ENCODE measurements at regions of chr6 and their contacts with region 1.

Region 1: GRCh38 chr6:83057705-83058321 is 7.8 kb downstream of the UBE3D start:
- DNase-seq: peak; percentile 26
- ATAC-seq: peak; percentile 59 to 74

Region 2: GRCh38 chr6:82247634-82248232 is 810.1 kb before region 1 on chr6 and contains the start of gene IBTK:
- intact Hi-C with region 1: loop called in 1 of 2 experiments (anchors 1 kb)
- DNase-seq: peak; percentile 95
- ATAC-seq: peak; percentile 98 to 99
- total RNA-seq, gene IBTK: 22.3 to 31.8 TPM

Region 3: GRCh38 chr6:82270881-82271645 is 786.8 kb before region 1 on chr6:
- intact Hi-C with region 1: loop called (anchors 2 to 5 kb)
- DNase-seq: no peak
- ATAC-seq: no peak